ENCODE measurements at regions of chr10 and their contacts with region 1.

Region 1: GRCh38 chr10:102009801-102010425 is 46.1 kb downstream of the ARMH3 start:
- DNase-seq: peak; percentile 79
- H3K4me3 ChIP-seq: no peak overlapping the region
- H3K27ac ChIP-seq: no peak overlapping the region
- H3K4me1 ChIP-seq: peaks cover 6% of the 10 kb centered on the region
- H3K27me3 ChIP-seq: no peaks in the 10 kb centered on the region
- CTCF ChIP-seq: peak; percentile 99 to 100

Region 2: GRCh38 chr10:101602761-101603398 is 407.0 kb before region 1 on chr10:
- CTCF ChIA-PET with region 1: no interaction called
- dilution Hi-C with region 1: no loop called
- in situ Hi-C with region 1: no loop called
- intact Hi-C with region 1: loop called (anchors 1 kb)
- DNase-seq: peak; percentile 62
- H3K4me3 ChIP-seq: no peak overlapping the region
- H3K27ac ChIP-seq: no peak overlapping the region
- H3K4me1 ChIP-seq: no peaks in the 10 kb centered on the region
- H3K27me3 ChIP-seq: no peaks in the 10 kb centered on the region
- CTCF ChIP-seq: peak; percentile 98

Region 3: DNA sequence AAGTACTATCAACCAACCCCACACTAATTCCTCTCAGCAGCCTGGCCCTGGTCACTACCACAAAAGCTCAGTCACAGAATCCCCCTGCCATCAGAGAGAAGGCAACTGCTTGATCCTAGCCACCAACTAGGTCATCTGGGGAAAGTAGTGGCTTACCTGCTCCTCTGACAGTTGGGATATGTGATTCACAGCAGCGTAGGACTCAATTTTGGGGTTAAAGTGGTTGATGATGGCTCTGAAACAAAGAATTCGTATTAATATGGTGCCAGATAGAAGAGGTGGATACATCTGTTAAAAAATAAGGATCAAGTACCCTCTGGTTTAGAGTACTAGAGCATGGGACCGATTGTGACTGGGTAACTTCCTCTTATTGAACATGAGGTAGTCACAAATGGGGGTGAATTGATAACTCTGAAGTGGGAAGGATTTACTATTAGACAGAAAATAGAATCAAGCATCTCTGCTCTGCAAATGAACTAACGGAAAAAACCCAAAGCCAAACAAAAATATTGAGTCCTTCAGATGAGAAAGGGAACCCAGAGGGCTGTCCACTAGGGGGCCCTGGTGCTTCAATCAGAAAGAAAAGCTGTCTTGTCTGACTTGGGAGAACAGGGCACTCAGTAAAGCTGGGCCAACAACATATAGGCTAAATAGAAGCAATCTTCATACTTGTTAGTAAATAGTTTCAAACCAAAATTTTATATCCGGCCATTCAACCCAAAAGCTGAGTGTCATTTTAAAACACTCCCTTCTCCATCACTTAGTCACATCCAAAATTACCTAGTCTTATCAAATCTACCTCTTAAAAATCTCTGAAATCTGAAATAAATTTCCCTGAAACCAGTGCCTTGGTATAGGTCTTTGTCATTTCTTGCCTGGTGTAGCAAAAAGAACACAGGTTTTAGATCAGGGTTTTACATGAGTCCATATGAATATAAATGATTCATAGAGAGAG is 120.4 kb before region 1 on chr10:
- CTCF ChIA-PET with region 1: interaction called, 8 read pairs
- dilution Hi-C with region 1: no loop called
- in situ Hi-C with region 1: loop called in 1 of 2 experiments (anchors 10 kb)
- intact Hi-C with region 1: loop called (anchors 1 kb)
- DNase-seq: peak; percentile 40
- H3K4me3 ChIP-seq: no peak overlapping the region
- H3K27ac ChIP-seq: no peak overlapping the region
- H3K4me1 ChIP-seq: no peaks in the 10 kb centered on the region
- H3K27me3 ChIP-seq: no peaks in the 10 kb centered on the region
- CTCF ChIP-seq: peak; percentile 89 to 91

Region 4: GRCh38 chr10:101952191-101952590 is 57.7 kb before region 1 on chr10:
- CTCF ChIA-PET with region 1: no interaction called
- dilution Hi-C with region 1: no loop called
- in situ Hi-C with region 1: no loop called
- intact Hi-C with region 1: no loop called
- DNase-seq: no peak
- H3K4me3 ChIP-seq: no peak overlapping the region
- H3K27ac ChIP-seq: no peak overlapping the region
- H3K4me1 ChIP-seq: no peaks in the 10 kb centered on the region
- H3K27me3 ChIP-seq: no peaks in the 10 kb centered on the region
- CTCF ChIP-seq: no peak

Region 5: GRCh38 chr10:102040305-102041050 is 30.6 kb after region 1 on chr10:
- CTCF ChIA-PET with region 1: interaction called, 10 read pairs
- dilution Hi-C with region 1: no loop called
- in situ Hi-C with region 1: no loop called
- intact Hi-C with region 1: no loop called
- DNase-seq: no peak
- H3K4me3 ChIP-seq: no peak overlapping the region
- H3K27ac ChIP-seq: no peak overlapping the region
- H3K4me1 ChIP-seq: no peaks in the 10 kb centered on the region
- H3K27me3 ChIP-seq: no peaks in the 10 kb centered on the region
- CTCF ChIP-seq: no peak

Region 6: DNA sequence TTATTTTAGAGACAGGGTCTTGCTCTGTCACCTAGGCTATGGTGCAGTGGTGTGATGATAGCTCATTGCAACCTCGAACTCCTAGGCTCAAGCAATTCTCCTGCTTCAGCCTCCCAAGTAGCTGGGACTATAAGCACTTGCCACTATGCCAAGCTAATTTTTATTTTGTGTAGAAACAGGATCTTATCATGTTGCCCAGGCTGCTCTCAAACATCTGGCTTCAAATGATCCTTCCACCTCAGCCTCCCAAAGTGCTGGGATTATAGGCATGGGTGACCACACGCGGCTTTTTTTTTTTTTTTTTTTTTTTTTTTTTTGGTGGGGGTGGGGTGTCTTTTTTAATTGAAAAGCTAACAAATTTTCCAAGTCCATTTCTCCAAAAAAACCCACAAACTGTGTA is 73.6 kb after region 1 on chr10:
- CTCF ChIA-PET with region 1: no interaction called
- dilution Hi-C with region 1: loop called (anchors 5 kb)
- in situ Hi-C with region 1: no loop called
- intact Hi-C with region 1: no loop called
- DNase-seq: no peak
- H3K4me3 ChIP-seq: no peak overlapping the region
- H3K27ac ChIP-seq: no peak overlapping the region
- H3K4me1 ChIP-seq: no peaks in the 10 kb centered on the region
- H3K27me3 ChIP-seq: no peaks in the 10 kb centered on the region
- CTCF ChIP-seq: no peak

Region 7: GRCh38 chr10:102132563-102133372 is 122.9 kb after region 1 on chr10 and contains the start of gene PPRC1:
- CTCF ChIA-PET with region 1: no interaction called
- dilution Hi-C with region 1: no loop called
- in situ Hi-C with region 1: no loop called
- intact Hi-C with region 1: no loop called
- DNase-seq: peak; percentile 98
- H3K4me3 ChIP-seq: peak within 1 kb of the TSS; percentile 78 to 97 (median 89)
- H3K27ac ChIP-seq: peak within 1 kb of the TSS; percentile 80
- H3K4me1 ChIP-seq: peaks cover 40% of the 10 kb centered on the region
- H3K27me3 ChIP-seq: no peaks in the 10 kb centered on the region
- CTCF ChIP-seq: peak; percentile 76 to 90
- total RNA-seq, gene PPRC1: 14.5 to 69.0 TPM

Region 8: DNA sequence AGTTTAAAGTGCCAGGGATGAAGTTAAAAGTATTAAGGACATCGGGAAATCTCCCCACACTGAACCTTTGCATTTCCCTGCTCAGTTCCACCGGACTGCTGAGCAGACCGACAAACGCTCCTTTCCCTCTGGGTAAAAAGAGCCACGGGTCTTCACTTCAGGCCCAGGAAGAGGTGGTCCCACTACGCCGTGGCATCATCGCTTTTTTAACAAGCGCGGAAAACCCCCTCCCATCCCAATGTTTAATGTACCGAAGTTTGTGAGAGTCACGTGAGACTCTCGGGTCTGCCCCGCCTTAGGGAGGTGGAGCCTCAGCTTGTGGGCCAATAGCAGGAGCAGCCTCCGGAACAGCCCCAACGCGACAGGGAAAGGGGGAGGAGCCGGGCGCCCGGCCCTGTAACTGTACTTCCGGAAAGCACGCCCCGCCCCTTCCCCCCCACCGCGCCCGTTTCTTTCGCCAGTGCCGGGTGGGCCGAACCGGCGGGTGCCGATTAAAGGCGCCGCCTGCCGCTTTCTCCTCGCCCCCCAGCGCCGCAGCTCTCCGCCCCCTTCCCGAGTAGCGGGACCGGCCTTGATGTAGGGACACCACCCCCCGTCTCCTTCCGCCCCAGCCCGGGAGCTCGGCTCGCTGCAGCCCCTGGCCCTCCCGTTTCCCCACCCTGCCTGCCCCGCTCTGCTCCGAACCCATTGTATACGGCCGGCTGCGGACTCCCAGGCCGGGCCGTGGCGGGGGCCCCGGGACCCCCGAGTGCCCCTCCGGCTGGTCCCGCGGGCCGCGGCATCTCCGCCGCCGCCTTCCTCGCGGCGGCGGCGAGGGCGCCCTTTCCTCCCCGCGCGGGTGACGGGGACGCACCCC is 632.2 kb after region 1 on chr10:
- CTCF ChIA-PET with region 1: no interaction called
- dilution Hi-C with region 1: no loop called
- in situ Hi-C with region 1: no loop called
- intact Hi-C with region 1: no loop called
- DNase-seq: peak; percentile 93
- H3K4me3 ChIP-seq: peak overlapping the region; percentile 64 to 93 (median 86)
- H3K27ac ChIP-seq: peak overlapping the region; percentile 71
- H3K4me1 ChIP-seq: peaks cover 8% of the 10 kb centered on the region
- H3K27me3 ChIP-seq: no peaks in the 10 kb centered on the region
- CTCF ChIP-seq: no peak